Activated CD4-positive, alpha-beta T cell treated with anti-CD3 and anti-CD28 coated beads for 36 hours (primary cell): ENCODE measurements at regions of chr10 and their contacts with region 1.

Region 1: GRCh38 chr10:71212318-71213126 is at the start of gene UNC5B:
- DNase-seq: peak; percentile 78
- ATAC-seq: peak; percentile 91
- H3K4me3 Mint-ChIP-seq: peak within 1 kb of the TSS; percentile 39
- H3K27ac Mint-ChIP-seq: no peak within 1 kb of the TSS
- H3K4me1 Mint-ChIP-seq: peaks cover 8% of the 10 kb centered on the region
- H3K27me3 Mint-ChIP-seq: peaks cover 55% of the 10 kb centered on the region
- total RNA-seq, gene UNC5B: 0.05 to 0.09 TPM

Region 2: DNA sequence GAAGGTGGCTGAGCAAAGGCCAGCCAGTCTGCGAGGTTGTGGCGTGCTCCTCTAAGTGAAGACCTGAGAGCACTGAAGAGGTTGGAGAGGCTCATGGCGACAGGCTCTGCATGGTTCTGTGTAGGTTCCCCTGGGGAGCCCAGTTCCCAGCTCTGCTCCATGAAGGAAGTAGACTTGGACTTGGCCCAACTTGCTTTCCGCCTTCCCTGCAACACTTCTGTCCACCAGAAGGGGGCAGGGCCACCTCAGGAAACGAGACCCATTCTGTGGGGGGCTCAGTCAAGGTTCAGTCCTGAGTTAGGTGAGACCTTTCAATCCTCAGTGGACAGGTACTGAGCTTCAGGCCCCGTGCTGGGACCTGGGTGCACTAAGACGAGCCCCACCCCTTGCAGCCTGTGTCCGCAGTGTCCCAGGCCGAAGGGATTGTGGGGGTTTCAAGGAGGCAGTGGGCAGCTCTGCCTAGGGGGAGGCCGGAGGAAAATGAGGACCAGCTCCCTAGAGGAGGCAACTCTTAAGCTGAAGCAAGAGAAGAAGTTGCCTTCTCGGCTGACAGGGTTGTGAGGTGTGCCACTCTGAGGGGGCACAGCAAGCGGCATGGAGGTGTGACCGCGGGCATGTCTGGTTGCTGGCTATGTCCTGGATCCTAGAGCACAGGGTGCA is 309.1 kb before region 1 on chr10:
- CTCF ChIA-PET with region 1: interaction called, 3 read pairs
- POLR2A ChIA-PET with region 1: no interaction called
- intact Hi-C with region 1: loop called in 1 of 2 experiments (anchors 1 kb)
- DNase-seq: peak; percentile 56
- ATAC-seq: no peak
- H3K4me3 Mint-ChIP-seq: no peak overlapping the region
- H3K27ac Mint-ChIP-seq: no peak overlapping the region
- H3K4me1 Mint-ChIP-seq: no peaks in the 10 kb centered on the region
- H3K27me3 Mint-ChIP-seq: no peaks in the 10 kb centered on the region

Region 3: GRCh38 chr10:71092812-71093401 is 119.6 kb before region 1 on chr10:
- CTCF ChIA-PET with region 1: interaction called, 3 read pairs
- POLR2A ChIA-PET with region 1: no interaction called
- intact Hi-C with region 1: loop called in 1 of 2 experiments (anchors 10 kb)
- DNase-seq: no peak
- ATAC-seq: no peak
- H3K4me3 Mint-ChIP-seq: no peak overlapping the region
- H3K27ac Mint-ChIP-seq: no peak overlapping the region
- H3K4me1 Mint-ChIP-seq: peaks cover 15% of the 10 kb centered on the region
- H3K27me3 Mint-ChIP-seq: peaks cover 21% of the 10 kb centered on the region